HEK293 (cell line): ENCODE measurements at regions of chr1 and their contacts with region 1.

Region 1: GRCh38 chr1:92831762-92832536 is at the start of gene RPL5:
- H3K4me3 ChIP-seq: peak within 1 kb of the TSS; percentile 100
- H3K27ac ChIP-seq: peak within 1 kb of the TSS; percentile 100
- H3K4me1 ChIP-seq: no peaks in the 10 kb centered on the region
- CTCF ChIP-seq: peak; percentile 99

Region 2: DNA sequence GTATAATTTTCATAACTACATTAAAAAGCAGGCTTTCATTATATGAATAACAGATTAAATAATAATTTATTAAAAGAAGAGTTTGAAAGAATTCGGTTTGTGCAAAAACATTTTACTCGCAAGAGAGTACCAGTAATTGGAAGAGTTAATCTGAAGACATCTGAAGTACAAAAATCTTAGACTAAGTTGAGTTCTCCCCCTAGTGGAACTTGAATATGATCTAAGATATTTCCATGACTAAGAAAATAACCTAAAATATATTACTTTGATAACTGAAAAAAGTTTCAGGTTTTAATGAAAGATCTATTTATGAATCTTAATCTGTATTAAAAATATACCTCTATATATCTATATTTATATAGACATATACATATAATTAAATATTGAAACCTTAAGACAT is 232.8 kb before region 1 on chr1:
- CTCF ChIA-PET with region 1: no interaction called
- POLR2A ChIA-PET with region 1: no interaction called
- H3K4me3 ChIP-seq: no peak overlapping the region
- H3K27ac ChIP-seq: no peak overlapping the region
- H3K4me1 ChIP-seq: no peaks in the 10 kb centered on the region
- CTCF ChIP-seq: no peak

Region 3: GRCh38 chr1:92759361-92759760 is 72.6 kb before region 1 on chr1:
- CTCF ChIA-PET with region 1: interaction called, 10 read pairs
- POLR2A ChIA-PET with region 1: interaction called, 7 read pairs
- H3K4me3 ChIP-seq: no peak overlapping the region
- H3K27ac ChIP-seq: no peak overlapping the region
- H3K4me1 ChIP-seq: 0 out of 2 replicates have a peak, but pooled peaks cover 3% of the 10 kb centered on the region
- CTCF ChIP-seq: no peak

Region 4: DNA sequence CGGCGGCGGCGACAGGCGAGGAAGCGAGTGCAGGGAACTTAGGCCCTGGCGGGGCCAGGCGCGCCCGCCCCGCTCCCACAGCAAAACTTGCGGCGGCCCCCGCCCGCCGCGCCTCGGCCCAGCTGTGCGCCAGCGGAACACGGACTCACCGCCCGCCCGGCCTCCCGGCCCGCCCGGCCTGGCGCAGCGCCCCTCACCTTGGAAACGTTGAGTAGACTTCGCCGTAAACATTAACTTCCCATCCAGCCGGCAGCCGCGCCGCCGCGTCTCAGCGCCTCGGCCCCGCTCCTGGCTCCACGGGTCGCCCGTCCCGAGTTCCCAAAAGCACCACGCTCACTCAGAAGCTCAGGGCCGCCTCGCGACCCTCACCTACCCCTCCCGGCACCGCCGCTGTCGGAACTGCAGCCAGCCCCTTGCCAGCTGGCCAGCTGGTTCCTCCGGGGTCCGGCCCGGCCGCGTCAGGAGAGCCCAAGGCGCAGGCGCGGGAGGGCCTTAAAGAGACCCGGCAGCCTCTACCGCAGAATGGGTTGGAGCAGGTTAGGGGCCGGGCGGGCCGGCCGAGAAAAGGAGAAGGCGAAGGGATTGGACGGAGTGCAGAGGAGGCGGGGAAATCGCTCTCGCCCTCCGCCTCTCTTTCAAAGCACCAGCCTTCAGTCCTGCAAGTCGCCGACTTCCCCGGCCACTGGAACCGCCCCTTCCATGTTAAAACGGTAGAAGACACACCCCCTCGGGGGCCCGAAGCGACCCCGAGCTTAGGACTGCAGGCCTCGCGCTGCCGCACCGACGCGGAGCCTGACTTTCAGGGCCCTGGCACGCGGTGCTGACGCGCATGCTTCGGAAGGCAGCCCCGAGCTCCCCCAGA is 47.1 kb before region 1 on chr1 and contains the start of gene EVI5:
- CTCF ChIA-PET with region 1: no interaction called
- POLR2A ChIA-PET with region 1: interaction called, 24 read pairs
- H3K4me3 ChIP-seq: peak within 1 kb of the TSS; percentile 59
- H3K27ac ChIP-seq: peak within 1 kb of the TSS; percentile 90
- H3K4me1 ChIP-seq: no peaks in the 10 kb centered on the region
- CTCF ChIP-seq: peak; percentile 42; the same call in 1 of the 2 replicates

Region 5: DNA sequence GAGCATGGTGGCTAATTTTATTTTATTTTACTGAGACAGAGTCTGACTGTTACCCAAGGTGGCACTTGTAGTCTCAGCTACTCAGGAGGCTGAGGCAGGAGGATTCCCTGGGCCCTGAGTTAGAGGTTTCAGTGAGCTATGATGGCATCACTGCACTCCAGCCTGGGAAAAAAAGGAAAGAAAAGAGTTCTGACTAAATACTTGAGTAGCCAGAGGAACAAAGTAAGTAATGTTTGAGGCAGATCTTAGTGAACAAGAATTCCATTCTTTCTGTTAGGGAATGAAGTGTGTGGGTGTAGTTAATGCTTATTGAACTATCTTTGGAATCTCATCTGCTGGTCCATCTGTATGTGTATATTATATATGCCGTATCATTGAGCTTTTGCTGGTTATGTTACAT is 34.0 kb before region 1 on chr1:
- CTCF ChIA-PET with region 1: no interaction called
- POLR2A ChIA-PET with region 1: no interaction called
- H3K4me3 ChIP-seq: no peak overlapping the region
- H3K27ac ChIP-seq: no peak overlapping the region
- H3K4me1 ChIP-seq: no peaks in the 10 kb centered on the region
- CTCF ChIP-seq: no peak

Region 6: GRCh38 chr1:92817986-92818764 is 13.8 kb before region 1 on chr1:
- CTCF ChIA-PET with region 1: interaction called, 12 read pairs
- POLR2A ChIA-PET with region 1: interaction called, 19 read pairs
- H3K4me3 ChIP-seq: no peak overlapping the region
- H3K27ac ChIP-seq: no peak overlapping the region
- H3K4me1 ChIP-seq: no peaks in the 10 kb centered on the region
- CTCF ChIP-seq: peak; percentile 27; the same call in 1 of the 2 replicates

Region 7: GRCh38 chr1:92843429-92844352 is 11.7 kb after region 1 on chr1:
- CTCF ChIA-PET with region 1: interaction called, 13 read pairs
- POLR2A ChIA-PET with region 1: interaction called, 12 read pairs
- H3K4me3 ChIP-seq: no peak overlapping the region
- H3K27ac ChIP-seq: no peak overlapping the region
- H3K4me1 ChIP-seq: no peaks in the 10 kb centered on the region
- CTCF ChIP-seq: no peak

Region 8: GRCh38 chr1:92907949-92908684 is 76.2 kb after region 1 on chr1:
- CTCF ChIA-PET with region 1: no interaction called
- POLR2A ChIA-PET with region 1: no interaction called
- H3K4me3 ChIP-seq: no peak overlapping the region
- H3K27ac ChIP-seq: no peak overlapping the region
- H3K4me1 ChIP-seq: no peaks in the 10 kb centered on the region; the same call in 1 of the 2 replicates
- CTCF ChIP-seq: no peak

Region 9: DNA sequence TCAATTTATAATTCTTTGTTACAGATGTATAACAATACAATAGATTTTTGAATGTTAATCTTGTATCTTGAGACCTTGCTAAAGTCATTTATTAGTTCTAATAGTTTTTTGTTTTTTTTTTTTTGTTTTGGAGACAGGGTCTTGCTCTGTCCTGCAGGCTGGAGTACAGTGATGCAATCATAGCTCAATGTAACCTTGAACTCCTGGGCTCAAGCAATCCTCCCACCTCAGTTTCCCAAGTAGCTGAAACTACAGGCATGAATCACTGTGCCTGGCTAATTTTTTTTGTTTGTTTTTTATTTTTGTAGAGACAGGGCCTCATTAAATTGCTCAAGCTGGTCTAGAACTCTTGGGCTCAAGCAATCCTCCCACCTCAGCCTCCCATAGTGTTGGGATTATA is 155.5 kb after region 1 on chr1:
- CTCF ChIA-PET with region 1: no interaction called
- POLR2A ChIA-PET with region 1: no interaction called
- H3K4me3 ChIP-seq: no peak overlapping the region
- H3K27ac ChIP-seq: no peak overlapping the region
- H3K4me1 ChIP-seq: no peaks in the 10 kb centered on the region
- CTCF ChIP-seq: no peak